Activated CD4-positive, alpha-beta T cell treated with anti-CD3 and anti-CD28 coated beads for 36 hours (primary cell): ENCODE measurements at regions of chr1 and their contacts with region 1.

Region 1: GRCh38 chr1:156838981-156839410 is 19.9 kb downstream of the INSRR start:
- DNase-seq: peak; percentile 63
- ATAC-seq: peak; percentile 49
- H3K4me3 Mint-ChIP-seq: no peak overlapping the region
- H3K27ac Mint-ChIP-seq: no peak overlapping the region
- H3K4me1 Mint-ChIP-seq: peaks cover 33% of the 10 kb centered on the region
- H3K27me3 Mint-ChIP-seq: peaks cover 25% of the 10 kb centered on the region

Region 2: DNA sequence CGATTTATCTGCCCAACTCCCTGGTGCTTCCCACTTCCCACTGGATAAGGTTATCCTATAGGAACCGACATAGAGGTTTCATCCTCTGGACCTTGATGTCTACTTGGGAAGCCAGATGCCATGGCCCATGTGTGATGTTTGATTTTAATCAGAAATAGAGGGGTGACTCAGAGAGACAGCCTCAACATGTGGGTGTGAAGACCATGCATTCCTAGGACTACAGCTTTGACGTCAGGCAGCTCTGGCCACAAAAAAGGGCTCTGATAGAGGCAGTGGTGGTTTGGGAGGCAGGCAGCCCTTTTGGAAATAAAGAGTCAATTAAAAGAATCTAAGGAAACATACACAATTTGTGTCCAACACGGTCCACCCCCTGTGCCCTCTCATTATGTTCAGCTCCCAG is 17.2 kb before region 1 on chr1:
- CTCF ChIA-PET with region 1: interaction called, 26 read pairs
- POLR2A ChIA-PET with region 1: no interaction called
- intact Hi-C with region 1: no loop called
- DNase-seq: peak; percentile 75
- ATAC-seq: peak; percentile 86
- H3K4me3 Mint-ChIP-seq: no peak overlapping the region
- H3K27ac Mint-ChIP-seq: peak overlapping the region; percentile 70
- H3K4me1 Mint-ChIP-seq: peaks cover 36% of the 10 kb centered on the region
- H3K27me3 Mint-ChIP-seq: no peaks in the 10 kb centered on the region

Region 3: GRCh38 chr1:156852418-156852874 is 13.4 kb after region 1 on chr1:
- CTCF ChIA-PET with region 1: interaction called, 30 read pairs
- POLR2A ChIA-PET with region 1: no interaction called
- intact Hi-C with region 1: no loop called
- DNase-seq: no peak
- ATAC-seq: no peak
- H3K4me3 Mint-ChIP-seq: no peak overlapping the region
- H3K27ac Mint-ChIP-seq: no peak overlapping the region
- H3K4me1 Mint-ChIP-seq: peaks cover 13% of the 10 kb centered on the region
- H3K27me3 Mint-ChIP-seq: peaks cover 7% of the 10 kb centered on the region

Region 4: GRCh38 chr1:156880473-156880872 is 41.5 kb after region 1 on chr1:
- CTCF ChIA-PET with region 1: no interaction called
- POLR2A ChIA-PET with region 1: no interaction called
- intact Hi-C with region 1: no loop called
- DNase-seq: no peak
- ATAC-seq: no peak
- H3K4me3 Mint-ChIP-seq: no peak overlapping the region
- H3K27ac Mint-ChIP-seq: no peak overlapping the region
- H3K4me1 Mint-ChIP-seq: no peaks in the 10 kb centered on the region
- H3K27me3 Mint-ChIP-seq: peaks cover 8% of the 10 kb centered on the region

Region 5: GRCh38 chr1:156892190-156893047 is 53.4 kb after region 1 on chr1:
- CTCF ChIA-PET with region 1: interaction called, 32 read pairs
- POLR2A ChIA-PET with region 1: no interaction called
- intact Hi-C with region 1: loop called (anchors 1 to 2 kb)
- DNase-seq: peak; percentile 95
- ATAC-seq: peak; percentile 97
- H3K4me3 Mint-ChIP-seq: peak overlapping the region; percentile 55
- H3K27ac Mint-ChIP-seq: no peak overlapping the region
- H3K4me1 Mint-ChIP-seq: peaks cover 14% of the 10 kb centered on the region
- H3K27me3 Mint-ChIP-seq: peaks cover 39% of the 10 kb centered on the region